ENCODE measurements at regions of chr9 and their contacts with region 1.

Region 1: DNA sequence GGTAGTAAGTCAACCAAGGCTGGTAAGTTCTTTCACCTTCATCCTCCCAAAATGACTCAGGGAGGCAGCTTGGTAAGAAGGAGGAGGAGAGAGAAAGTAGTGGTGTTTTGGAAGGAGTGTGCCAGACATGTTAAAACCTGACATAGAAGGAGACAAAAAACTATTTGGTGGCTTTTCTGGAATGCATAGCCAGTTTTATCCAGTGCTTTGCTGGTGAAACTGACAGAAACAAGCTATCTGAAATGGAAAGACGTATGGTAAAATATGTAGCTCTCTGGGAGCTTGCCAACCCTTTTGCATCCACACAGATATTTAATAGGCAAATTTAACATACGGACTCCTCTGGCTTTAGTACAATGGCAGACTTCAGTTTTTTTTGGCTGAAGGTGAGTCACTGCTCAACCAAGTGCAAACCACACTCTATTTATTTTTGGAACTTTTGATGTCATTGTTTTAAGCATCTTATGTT is 45.4 kb downstream of the RAB14 start:
- DNase-seq: peak; percentile 74
- ATAC-seq: peak; percentile 89
- H3K4me3 ChIP-seq: peak overlapping the region in 1 of 5 experiments; percentile 28
- H3K4me3 Mint-ChIP-seq: peak overlapping the region; percentile 76
- H3K27ac ChIP-seq: peak overlapping the region; percentile 61 to 88
- H3K27ac Mint-ChIP-seq: peak overlapping the region; percentile 95
- H3K4me1 ChIP-seq: peaks cover 47 to 50% of the 10 kb centered on the region in 2 donors
- H3K4me1 Mint-ChIP-seq: peaks cover 64% of the 10 kb centered on the region
- H3K27me3 ChIP-seq: no peaks in the 10 kb centered on the region
- H3K27me3 Mint-ChIP-seq: no peaks in the 10 kb centered on the region
- CTCF ChIP-seq: no peak

Region 2: DNA sequence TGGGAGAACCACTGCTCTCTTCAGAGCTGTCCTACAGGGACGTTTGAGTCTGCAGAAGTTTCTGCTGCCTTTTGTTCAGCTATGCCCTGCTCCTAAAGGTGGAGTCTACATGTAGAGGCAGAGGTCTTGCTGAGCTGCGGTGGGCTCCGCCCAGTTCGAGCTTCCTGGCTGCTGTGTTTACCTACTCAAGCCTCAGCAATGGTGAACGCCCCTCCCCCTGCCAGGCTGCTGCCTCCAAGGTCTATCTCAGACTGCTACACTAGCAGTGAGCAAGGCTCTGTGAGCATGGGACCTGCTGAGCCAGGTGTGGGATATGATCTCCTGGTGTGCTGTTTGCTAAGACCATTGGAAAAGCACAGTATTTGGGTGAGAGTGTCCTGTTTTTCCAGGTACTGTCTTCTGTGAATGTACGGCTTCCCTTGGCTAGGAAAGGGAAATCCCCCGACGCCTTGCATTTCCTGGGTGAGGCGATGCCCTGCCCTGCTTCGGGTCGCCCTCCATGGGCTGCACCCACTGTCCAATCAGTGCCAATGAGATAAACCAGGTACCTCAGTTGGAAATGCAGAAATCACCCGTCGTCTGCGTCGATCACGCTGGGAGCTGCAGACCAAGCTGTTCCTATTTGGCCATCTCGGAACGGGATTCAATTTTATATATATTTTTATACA is 23.0 kb before region 1 on chr9:
- CTCF ChIA-PET with region 1: interaction called, 3 read pairs
- POLR2A ChIA-PET with region 1: no interaction called
- intact Hi-C with region 1: loop called (anchors 2 kb)
- DNase-seq: peak; percentile 56
- ATAC-seq: peak; percentile 89
- H3K4me3 ChIP-seq: peak overlapping the region in 2 of 5 experiments; percentile 2 to 29
- H3K4me3 Mint-ChIP-seq: peak overlapping the region; percentile 69
- H3K27ac ChIP-seq: peak overlapping the region in 1 of 2 donors; percentile 60
- H3K27ac Mint-ChIP-seq: peak overlapping the region; percentile 83
- H3K4me1 ChIP-seq: peaks cover 14 to 17% of the 10 kb centered on the region in 2 donors
- H3K4me1 Mint-ChIP-seq: peaks cover 54% of the 10 kb centered on the region
- H3K27me3 ChIP-seq: no peaks in the 10 kb centered on the region
- H3K27me3 Mint-ChIP-seq: no peaks in the 10 kb centered on the region
- CTCF ChIP-seq: no peak

Region 3: GRCh38 chr9:121192959-121193640 is 36.8 kb after region 1 on chr9:
- CTCF ChIA-PET with region 1: no interaction called
- POLR2A ChIA-PET with region 1: no interaction called
- intact Hi-C with region 1: no loop called
- DNase-seq: no peak
- ATAC-seq: no peak
- H3K4me3 ChIP-seq: no peak overlapping the region
- H3K4me3 Mint-ChIP-seq: no peak overlapping the region
- H3K27ac ChIP-seq: peak overlapping the region in 1 of 2 donors; percentile 75
- H3K27ac Mint-ChIP-seq: no peak overlapping the region
- H3K4me1 ChIP-seq: peaks cover 22 to 73% of the 10 kb centered on the region in 2 donors
- H3K4me1 Mint-ChIP-seq: peaks cover 76% of the 10 kb centered on the region
- H3K27me3 ChIP-seq: no peaks in the 10 kb centered on the region
- H3K27me3 Mint-ChIP-seq: no peaks in the 10 kb centered on the region
- CTCF ChIP-seq: no peak

Region 4: DNA sequence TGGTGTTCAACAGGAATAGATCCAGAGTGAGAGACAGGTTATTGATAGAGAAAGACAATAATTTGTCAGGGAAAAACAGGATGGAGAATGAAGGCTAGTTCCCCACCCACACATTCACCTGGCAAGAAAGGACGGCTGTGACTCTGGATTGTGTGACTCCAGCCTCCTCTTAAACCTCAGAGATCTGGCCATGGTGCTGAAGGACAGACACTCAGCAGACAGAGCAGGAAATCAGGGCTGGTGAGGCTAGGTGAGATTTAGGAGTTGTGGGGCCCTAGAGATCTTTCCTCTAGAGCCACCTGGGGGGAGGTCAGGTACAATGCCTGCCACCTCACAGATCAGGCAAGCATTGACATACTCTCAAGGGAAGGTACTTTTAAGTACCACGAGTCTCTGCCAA is 1485.9 kb after region 1 on chr9:
- CTCF ChIA-PET with region 1: no interaction called
- POLR2A ChIA-PET with region 1: no interaction called
- intact Hi-C with region 1: no loop called
- DNase-seq: no peak
- ATAC-seq: no peak
- H3K4me3 ChIP-seq: no peak overlapping the region
- H3K4me3 Mint-ChIP-seq: no peak overlapping the region
- H3K27ac ChIP-seq: no peak overlapping the region
- H3K27ac Mint-ChIP-seq: no peak overlapping the region
- H3K4me1 ChIP-seq: no peaks in the 10 kb centered on the region
- H3K4me1 Mint-ChIP-seq: no peaks in the 10 kb centered on the region
- H3K27me3 ChIP-seq: peaks cover 0 to 8% (median 2%) of the 10 kb centered on the region in 4 experiments
- H3K27me3 Mint-ChIP-seq: peaks cover 34% of the 10 kb centered on the region
- CTCF ChIP-seq: no peak

Measured in B cell (primary cell).